Head of caudate nucleus (tissue), 42 donors: ENCODE measurements at regions of chr1 and their contacts with region 1.

Region 1: DNA sequence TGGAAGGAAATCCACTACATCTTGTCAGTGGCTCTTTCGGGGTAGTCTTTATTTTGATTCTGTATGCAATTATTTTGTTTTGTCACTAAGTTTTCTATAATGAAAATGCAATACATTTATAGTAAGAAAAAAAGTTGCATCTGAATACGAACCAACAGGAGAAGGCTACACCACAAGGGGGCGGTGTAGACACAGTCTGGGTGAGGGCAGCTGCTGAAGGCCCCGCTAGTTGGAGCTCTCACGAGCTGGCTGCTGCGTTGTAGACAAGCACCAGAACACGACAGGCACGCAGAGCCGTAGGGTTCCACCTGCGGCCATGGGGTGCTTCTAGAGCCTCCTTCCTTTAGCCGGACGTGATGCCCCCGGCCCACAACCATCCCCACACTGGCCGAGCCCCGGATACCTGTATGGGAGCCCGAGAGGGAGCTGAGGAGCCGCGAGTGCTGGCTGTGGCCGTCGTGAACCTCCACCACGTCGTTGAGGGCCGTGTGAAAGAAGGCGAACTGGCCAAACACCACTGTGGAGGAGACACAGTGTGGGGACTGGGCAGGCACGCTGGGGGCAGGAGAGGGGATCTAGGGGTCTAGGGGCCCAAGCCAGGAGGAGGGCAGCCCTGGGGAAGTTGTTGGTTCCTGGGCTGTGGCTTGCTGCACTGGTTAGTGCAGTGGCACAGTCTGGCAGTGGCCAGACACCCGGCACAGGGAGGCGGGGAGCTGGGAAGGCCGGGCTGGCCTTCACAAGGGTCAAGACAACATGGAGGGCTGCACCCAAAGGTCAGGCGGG is 160.8 kb downstream of the ZSCAN20 start:
- DNase-seq: peak; percentile 87 to 98 (median 96)

Region 2: GRCh38 chr1:34597877-34598514 is 964.8 kb after region 1 on chr1:
- intact Hi-C with region 1: loop called (anchors 10 kb)
- DNase-seq: peak; percentile 75 to 95 (median 88)

Region 3: DNA sequence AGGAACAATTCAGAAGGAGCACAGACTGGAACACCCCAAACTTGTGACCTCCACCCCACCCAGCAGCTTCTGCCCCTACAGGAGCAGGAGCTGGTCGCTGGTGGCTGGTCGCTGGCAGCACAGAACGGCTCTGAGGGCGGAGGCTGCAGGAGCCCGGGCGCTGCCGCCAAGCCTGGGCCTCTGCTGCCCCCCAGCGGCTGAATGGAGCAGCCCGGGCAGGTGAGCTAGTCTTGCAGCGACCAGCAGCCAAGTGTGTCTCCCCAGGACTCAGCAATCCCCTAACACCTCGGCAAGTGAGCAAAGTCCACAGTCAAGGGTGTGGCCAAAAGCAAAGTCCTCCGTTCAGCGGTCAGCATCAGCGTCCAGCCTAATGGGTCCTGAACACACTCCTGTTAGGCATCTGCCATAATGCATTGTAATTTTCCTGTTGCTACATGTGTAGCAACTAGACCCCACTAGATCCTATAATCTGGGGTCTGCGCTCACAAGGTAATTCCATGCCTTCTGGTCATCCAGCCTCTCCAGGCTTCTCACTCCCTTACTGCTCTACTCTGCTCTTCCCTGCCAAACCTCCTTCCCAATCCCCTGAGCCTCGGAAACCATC is 1109.6 kb after region 1 on chr1:
- intact Hi-C with region 1: loop called (anchors 10 kb)
- DNase-seq: peak; percentile 58 to 94 (median 86)